ENCODE measurements at regions of chr10 and their contacts with region 1.

Region 1: DNA sequence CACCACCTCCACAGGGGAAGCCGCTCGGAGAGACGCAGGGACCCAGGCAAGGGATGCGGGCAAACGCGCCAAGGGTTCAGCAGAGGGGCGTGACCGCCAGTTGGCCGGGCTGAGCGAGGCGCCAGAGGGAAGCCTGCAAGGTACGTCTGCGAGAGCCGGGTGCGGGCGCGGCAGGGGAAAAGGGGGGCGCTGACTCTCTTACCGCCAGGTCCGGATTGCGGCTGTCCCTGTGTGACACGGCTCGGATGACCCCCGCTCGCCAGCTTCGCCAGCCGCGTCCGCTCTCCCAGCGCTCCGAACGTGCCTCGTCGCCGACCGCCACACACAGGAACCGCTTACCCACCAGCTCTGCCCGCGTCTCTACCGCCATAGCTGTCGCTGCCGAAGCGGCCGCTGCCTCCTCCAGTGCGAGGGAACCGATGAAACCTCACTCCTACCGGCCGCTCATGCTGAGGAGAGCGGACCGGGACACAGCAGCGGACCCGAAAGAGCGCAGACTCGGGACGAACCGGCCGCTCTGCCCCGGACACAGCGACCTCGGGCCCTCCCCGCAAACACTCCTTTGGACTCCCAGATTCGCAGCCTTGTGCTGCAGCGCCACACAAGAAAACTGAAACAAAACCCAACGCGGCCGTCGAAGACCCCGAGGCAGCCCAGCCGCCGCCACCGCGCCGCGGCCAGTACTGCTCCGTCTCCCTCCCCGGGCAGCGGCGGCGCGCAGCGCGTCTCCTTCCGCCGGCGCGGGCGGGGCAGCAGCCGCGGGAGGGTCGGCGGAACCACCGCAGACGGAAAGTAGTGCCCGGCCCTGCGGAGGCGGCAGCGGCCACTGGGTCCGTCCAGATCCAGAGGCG is at the start of gene JMJD1C:
- DNase-seq: peak; percentile 74
- ATAC-seq: peak; percentile 74
- H3K4me3 Mint-ChIP-seq: peak within 1 kb of the TSS; percentile 97
- H3K27ac Mint-ChIP-seq: peak within 1 kb of the TSS; percentile 92
- H3K4me1 Mint-ChIP-seq: peaks cover 20% of the 10 kb centered on the region
- H3K27me3 Mint-ChIP-seq: no peaks in the 10 kb centered on the region
- CTCF ChIP-seq: no peak
- total RNA-seq, gene JMJD1C: 167 and 176 TPM in 2 replicates

Region 2: GRCh38 chr10:62961951-62962523 is 503.5 kb before region 1 on chr10:
- CTCF ChIA-PET with region 1: no interaction called
- POLR2A ChIA-PET with region 1: no interaction called
- intact Hi-C with region 1: no loop called
- DNase-seq: no peak
- ATAC-seq: no peak
- H3K4me3 Mint-ChIP-seq: no peak overlapping the region
- H3K27ac Mint-ChIP-seq: no peak overlapping the region
- H3K4me1 Mint-ChIP-seq: no peaks in the 10 kb centered on the region
- H3K27me3 Mint-ChIP-seq: peaks cover 6% of the 10 kb centered on the region
- CTCF ChIP-seq: no peak

Region 3: DNA sequence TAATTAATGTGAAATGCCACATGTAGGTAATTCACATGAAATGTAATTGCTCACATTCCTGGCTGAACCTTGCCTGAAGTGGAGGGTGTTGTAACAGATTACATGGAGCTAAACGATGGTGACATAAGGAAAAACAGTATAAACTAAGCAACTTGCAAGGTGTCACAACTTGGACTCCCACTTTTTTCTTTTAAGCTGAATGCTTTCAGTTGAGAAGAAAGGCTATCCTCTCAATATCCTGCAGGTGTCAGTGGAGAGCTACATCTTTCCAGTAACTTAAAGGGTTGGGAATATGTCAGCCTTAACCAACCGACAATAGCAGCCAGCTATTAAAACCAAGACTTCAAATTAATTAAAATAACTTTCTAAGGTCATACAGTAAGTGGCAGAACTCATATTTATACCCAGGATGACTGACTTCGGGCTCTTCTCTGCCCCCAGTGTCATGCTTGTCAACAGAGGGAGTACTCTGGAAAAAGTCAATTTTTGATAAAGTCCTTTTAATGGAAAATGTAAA is 298.7 kb before region 1 on chr10:
- CTCF ChIA-PET with region 1: interaction called, 8 read pairs
- POLR2A ChIA-PET with region 1: no interaction called
- intact Hi-C with region 1: loop called (anchors 2 kb)
- DNase-seq: no peak
- ATAC-seq: peak; percentile 88
- H3K4me3 Mint-ChIP-seq: no peak overlapping the region
- H3K27ac Mint-ChIP-seq: peak overlapping the region; percentile 12
- H3K4me1 Mint-ChIP-seq: peaks cover 4% of the 10 kb centered on the region
- H3K27me3 Mint-ChIP-seq: no peaks in the 10 kb centered on the region
- CTCF ChIP-seq: no peak

Region 4: GRCh38 chr10:63355682-63356081 is 109.8 kb before region 1 on chr10:
- CTCF ChIA-PET with region 1: no interaction called
- POLR2A ChIA-PET with region 1: no interaction called
- intact Hi-C with region 1: loop called (anchors 5 kb)
- DNase-seq: no peak
- ATAC-seq: no peak
- H3K4me3 Mint-ChIP-seq: no peak overlapping the region
- H3K27ac Mint-ChIP-seq: peak overlapping the region; percentile 32
- H3K4me1 Mint-ChIP-seq: peaks cover 22% of the 10 kb centered on the region
- H3K27me3 Mint-ChIP-seq: no peaks in the 10 kb centered on the region
- CTCF ChIP-seq: no peak

Region 5: GRCh38 chr10:63521416-63522276 is 56.1 kb after region 1 on chr10:
- CTCF ChIA-PET with region 1: no interaction called
- POLR2A ChIA-PET with region 1: interaction called, 5 read pairs
- intact Hi-C with region 1: loop called (anchors 1 kb)
- DNase-seq: peak; percentile 72
- ATAC-seq: peak; percentile 70
- H3K4me3 Mint-ChIP-seq: peak overlapping the region; percentile 86
- H3K27ac Mint-ChIP-seq: peak overlapping the region; percentile 72
- H3K4me1 Mint-ChIP-seq: peaks cover 47% of the 10 kb centered on the region
- H3K27me3 Mint-ChIP-seq: no peaks in the 10 kb centered on the region
- CTCF ChIP-seq: no peak

Region 6: DNA sequence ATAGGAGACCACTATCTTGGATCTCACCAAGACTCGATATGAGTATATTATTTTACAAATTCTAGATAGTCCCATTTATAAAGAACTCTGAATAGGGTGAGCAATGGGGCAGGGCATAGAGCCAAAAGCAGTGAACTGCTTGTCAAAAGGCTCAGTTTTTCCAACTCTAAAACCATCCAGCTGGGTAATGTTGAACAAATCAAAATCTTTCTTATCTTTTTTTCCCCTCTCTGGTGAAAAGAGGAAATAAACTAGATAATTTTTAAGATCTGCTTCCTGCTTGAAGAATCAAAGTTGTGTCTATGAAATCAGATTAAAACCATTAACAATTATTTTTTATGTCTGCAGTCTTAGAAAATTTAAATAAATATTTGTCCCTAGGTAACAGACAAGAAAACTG is 234.3 kb after region 1 on chr10:
- CTCF ChIA-PET with region 1: no interaction called
- POLR2A ChIA-PET with region 1: no interaction called
- intact Hi-C with region 1: loop called (anchors 5 kb)
- DNase-seq: no peak
- ATAC-seq: no peak
- H3K4me3 Mint-ChIP-seq: no peak overlapping the region
- H3K27ac Mint-ChIP-seq: peak overlapping the region; percentile 57
- H3K4me1 Mint-ChIP-seq: peaks cover 49% of the 10 kb centered on the region
- H3K27me3 Mint-ChIP-seq: no peaks in the 10 kb centered on the region
- CTCF ChIP-seq: no peak

Measured in activated B cell treated with CpG ODN at 0.5 μM for 24 hours (primary cell).